Activated naive CD4-positive, alpha-beta T cell treated with anti-CD3 and anti-CD28 coated beads for 36 hours (primary cell): ENCODE measurements at regions of chr15 and their contacts with region 1.

Region 1: DNA sequence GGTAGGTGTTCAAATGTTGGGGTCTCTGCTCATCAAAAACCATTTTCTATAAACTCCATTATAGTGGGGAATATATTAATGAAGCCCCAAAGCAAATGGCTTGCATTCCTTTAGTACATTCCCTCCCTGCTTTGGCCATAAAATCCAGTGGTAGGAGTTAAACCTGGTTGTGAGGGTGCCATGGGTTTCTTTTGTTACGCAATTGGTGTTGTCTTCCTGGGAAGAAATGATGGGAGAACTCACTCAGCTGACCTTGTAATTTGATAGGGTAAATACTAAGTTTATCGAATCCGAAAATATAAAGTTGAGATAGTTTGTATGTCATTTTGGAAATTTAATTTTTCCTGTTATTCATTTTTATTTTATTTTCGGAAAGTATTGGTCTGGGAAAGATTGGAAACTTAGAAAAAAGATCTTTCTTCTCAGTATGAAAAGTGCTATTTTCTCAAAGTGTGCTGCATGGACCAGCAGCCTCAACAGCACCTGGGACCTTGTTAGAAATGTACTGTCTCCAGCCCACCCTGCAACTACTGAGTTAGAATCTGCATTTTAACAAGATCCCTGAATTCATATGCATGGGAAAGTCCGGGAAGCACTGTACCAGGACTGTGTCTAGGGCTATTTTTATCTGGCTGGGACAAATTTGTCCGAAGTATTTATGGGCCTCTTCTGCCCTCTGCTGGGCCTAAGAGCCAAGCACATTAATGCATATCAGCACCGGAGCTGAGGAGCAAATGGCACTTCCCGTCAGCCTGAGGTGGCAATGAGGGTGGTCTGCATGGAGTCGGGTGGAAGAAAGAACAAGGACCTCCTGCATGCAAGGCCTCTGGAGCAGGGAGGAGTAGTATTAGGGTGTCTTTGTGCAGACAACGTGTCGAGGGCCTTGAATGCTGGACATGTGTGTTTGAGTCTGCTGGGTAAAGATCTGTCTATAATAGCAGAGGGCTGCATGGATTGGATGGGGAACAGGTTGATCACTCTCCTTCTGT is 54.7 kb downstream of the FAM81A start:
- DNase-seq: peak; percentile 64
- H3K4me3 Mint-ChIP-seq: no peak overlapping the region
- H3K27ac Mint-ChIP-seq: no peak overlapping the region
- H3K4me1 Mint-ChIP-seq: peaks cover 2% of the 10 kb centered on the region
- H3K27me3 Mint-ChIP-seq: no peaks in the 10 kb centered on the region

Region 2: GRCh38 chr15:58423831-58424608 is 1068.7 kb before region 1 on chr15:
- CTCF ChIA-PET with region 1: no interaction called
- intact Hi-C with region 1: no loop called
- DNase-seq: peak; percentile 44
- H3K4me3 Mint-ChIP-seq: no peak overlapping the region
- H3K27ac Mint-ChIP-seq: no peak overlapping the region
- H3K4me1 Mint-ChIP-seq: peaks cover 20% of the 10 kb centered on the region
- H3K27me3 Mint-ChIP-seq: no peaks in the 10 kb centered on the region

Region 3: GRCh38 chr15:58957101-58957973 is 535.3 kb before region 1 on chr15:
- CTCF ChIA-PET with region 1: interaction called, 4 read pairs
- intact Hi-C with region 1: loop called (anchors 1 kb)
- DNase-seq: peak; percentile 75
- H3K4me3 Mint-ChIP-seq: no peak overlapping the region
- H3K27ac Mint-ChIP-seq: no peak overlapping the region
- H3K4me1 Mint-ChIP-seq: peaks cover 10% of the 10 kb centered on the region
- H3K27me3 Mint-ChIP-seq: no peaks in the 10 kb centered on the region

Region 4: GRCh38 chr15:59160880-59161593 is 331.6 kb before region 1 on chr15:
- CTCF ChIA-PET with region 1: interaction called, 3 read pairs
- intact Hi-C with region 1: loop called (anchors 5 kb)
- DNase-seq: peak; percentile 39
- H3K4me3 Mint-ChIP-seq: no peak overlapping the region
- H3K27ac Mint-ChIP-seq: no peak overlapping the region
- H3K4me1 Mint-ChIP-seq: no peaks in the 10 kb centered on the region
- H3K27me3 Mint-ChIP-seq: peaks cover 3% of the 10 kb centered on the region

Region 5: DNA sequence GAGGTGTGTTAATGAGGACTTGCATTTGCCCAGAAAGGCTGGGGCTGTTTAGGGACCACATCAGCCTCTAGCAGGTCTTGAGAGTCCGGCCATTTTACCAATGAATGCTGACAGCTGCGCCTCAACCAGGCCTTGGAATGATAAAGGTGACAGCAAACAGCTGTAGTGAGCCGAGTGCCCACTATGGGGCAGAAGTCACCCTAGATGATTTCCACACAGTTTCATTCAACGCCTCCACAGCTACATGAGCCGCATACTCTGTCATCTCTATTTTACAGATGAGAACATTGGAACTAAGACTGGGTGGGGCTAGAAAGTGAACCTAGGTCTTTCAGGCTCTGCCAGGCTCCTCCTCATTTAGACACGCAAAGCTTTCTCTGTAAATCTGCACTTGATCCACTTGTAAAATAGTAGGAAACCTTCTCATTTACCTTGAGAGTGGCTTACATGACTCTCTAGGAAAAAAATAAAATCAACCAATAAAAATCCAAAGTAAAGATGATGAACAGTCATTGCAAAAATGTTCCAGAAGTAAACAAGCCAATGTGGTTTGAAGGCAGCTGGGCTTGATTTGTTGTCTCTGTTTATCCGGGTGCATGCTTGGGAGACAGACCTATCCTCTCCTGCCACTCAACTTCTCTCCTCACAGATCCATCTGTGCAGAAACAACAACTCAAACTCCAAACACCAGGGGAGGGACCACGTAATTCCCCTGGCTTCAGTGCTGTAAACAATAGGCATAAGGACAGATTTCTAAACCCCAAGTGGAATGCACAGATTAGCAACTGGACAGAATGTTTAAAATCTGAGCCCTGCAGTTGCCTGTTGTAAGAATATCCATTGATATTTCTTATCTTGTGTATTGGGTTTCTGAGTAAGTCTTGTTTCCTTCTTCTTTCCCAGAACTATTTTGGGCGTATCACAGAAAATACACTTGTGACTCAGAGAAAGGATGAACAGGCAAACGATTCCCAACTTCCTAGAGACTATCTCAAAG is 317.6 kb before region 1 on chr15:
- CTCF ChIA-PET with region 1: interaction called, 4 read pairs
- intact Hi-C with region 1: loop called (anchors 1 kb)
- DNase-seq: peak; percentile 55
- H3K4me3 Mint-ChIP-seq: no peak overlapping the region
- H3K27ac Mint-ChIP-seq: no peak overlapping the region
- H3K4me1 Mint-ChIP-seq: no peaks in the 10 kb centered on the region
- H3K27me3 Mint-ChIP-seq: peaks cover 12% of the 10 kb centered on the region

Region 6: GRCh38 chr15:59247364-59247763 is 245.3 kb before region 1 on chr15:
- CTCF ChIA-PET with region 1: interaction called, 21 read pairs
- intact Hi-C with region 1: loop called (anchors 1 kb)
- DNase-seq: peak; percentile 71
- H3K4me3 Mint-ChIP-seq: no peak overlapping the region
- H3K27ac Mint-ChIP-seq: no peak overlapping the region
- H3K4me1 Mint-ChIP-seq: no peaks in the 10 kb centered on the region
- H3K27me3 Mint-ChIP-seq: no peaks in the 10 kb centered on the region

Region 7: GRCh38 chr15:59605994-59606393 is 113.3 kb after region 1 on chr15:
- CTCF ChIA-PET with region 1: no interaction called
- intact Hi-C with region 1: no loop called
- DNase-seq: no peak
- H3K4me3 Mint-ChIP-seq: no peak overlapping the region
- H3K27ac Mint-ChIP-seq: no peak overlapping the region
- H3K4me1 Mint-ChIP-seq: no peaks in the 10 kb centered on the region
- H3K27me3 Mint-ChIP-seq: peaks cover 4% of the 10 kb centered on the region

Region 8: GRCh38 chr15:59933607-59934006 is 440.9 kb after region 1 on chr15:
- CTCF ChIA-PET with region 1: no interaction called
- intact Hi-C with region 1: no loop called
- DNase-seq: no peak
- H3K4me3 Mint-ChIP-seq: no peak overlapping the region
- H3K27ac Mint-ChIP-seq: no peak overlapping the region
- H3K4me1 Mint-ChIP-seq: no peaks in the 10 kb centered on the region
- H3K27me3 Mint-ChIP-seq: no peaks in the 10 kb centered on the region

Region 9: DNA sequence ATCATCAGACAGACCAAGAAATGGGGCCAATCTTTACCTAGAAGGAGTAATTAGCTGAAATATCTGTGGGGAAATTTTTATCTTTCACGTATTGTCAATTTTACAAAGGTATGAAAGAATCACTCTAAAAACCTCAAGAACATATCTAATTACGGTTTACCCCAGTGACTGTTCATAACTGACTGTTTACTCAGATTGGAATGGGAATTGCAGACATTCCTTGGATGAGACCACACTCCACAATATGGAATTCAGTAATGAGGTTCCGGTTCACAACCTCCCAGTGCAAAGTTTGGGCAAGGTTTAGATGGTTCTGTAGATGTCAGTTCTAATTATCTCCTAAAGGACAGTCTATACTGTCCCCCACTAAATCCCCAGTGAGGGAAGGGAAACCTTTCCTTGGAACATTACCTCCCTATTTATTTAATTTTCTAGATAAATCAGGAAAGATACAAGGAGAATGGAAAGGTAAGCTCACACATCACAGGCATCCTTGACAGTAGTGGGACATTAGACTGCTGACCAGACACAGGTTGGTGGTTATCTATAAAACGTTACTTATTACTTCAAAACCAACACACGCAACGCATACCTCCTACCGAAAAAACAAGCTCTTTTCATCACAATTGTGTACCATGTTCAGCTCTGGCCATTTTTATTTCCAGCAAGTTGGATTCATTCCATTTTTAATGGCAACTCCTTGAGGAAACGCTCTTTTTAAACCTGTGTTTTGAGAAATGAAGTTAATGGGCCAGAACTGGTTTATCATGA is 1606.5 kb after region 1 on chr15:
- CTCF ChIA-PET with region 1: no interaction called
- intact Hi-C with region 1: no loop called
- DNase-seq: no peak
- H3K4me3 Mint-ChIP-seq: no peak overlapping the region
- H3K27ac Mint-ChIP-seq: no peak overlapping the region
- H3K4me1 Mint-ChIP-seq: no peaks in the 10 kb centered on the region
- H3K27me3 Mint-ChIP-seq: peaks cover 25% of the 10 kb centered on the region